ENCODE measurements at regions of chrX and their contacts with region 1.

Region 1: DNA sequence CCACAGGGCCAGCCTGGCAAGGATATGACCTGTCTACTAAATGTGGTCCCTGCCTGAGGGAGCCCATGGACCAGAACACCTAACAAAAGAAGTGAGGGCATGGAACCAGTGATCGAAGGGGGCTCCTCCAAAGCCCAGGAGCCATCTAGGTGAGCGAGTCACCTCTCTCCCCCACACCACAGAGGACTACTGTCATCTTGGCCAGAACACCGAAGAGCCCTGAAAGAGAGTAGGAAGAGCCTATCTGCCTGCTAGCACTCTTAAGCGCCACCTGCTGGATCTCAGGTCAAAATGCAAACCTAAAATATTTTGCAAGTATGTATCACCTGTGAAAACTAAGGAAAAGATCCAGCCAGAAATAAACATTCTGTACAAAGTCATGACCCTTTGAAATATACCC is 137.9 kb upstream of the ZXDB start:
- DNase-seq: no peak
- H3K4me3 ChIP-seq: no peak overlapping the region
- H3K27ac ChIP-seq: no peak overlapping the region
- H3K27me3 ChIP-seq: peaks cover 0 to 66% (median 7%) of the 10 kb centered on the region in 45 donors
- CTCF ChIP-seq: peak in 47 of 56 donors; percentile 15 to 62 (median 44)

Region 2: DNA sequence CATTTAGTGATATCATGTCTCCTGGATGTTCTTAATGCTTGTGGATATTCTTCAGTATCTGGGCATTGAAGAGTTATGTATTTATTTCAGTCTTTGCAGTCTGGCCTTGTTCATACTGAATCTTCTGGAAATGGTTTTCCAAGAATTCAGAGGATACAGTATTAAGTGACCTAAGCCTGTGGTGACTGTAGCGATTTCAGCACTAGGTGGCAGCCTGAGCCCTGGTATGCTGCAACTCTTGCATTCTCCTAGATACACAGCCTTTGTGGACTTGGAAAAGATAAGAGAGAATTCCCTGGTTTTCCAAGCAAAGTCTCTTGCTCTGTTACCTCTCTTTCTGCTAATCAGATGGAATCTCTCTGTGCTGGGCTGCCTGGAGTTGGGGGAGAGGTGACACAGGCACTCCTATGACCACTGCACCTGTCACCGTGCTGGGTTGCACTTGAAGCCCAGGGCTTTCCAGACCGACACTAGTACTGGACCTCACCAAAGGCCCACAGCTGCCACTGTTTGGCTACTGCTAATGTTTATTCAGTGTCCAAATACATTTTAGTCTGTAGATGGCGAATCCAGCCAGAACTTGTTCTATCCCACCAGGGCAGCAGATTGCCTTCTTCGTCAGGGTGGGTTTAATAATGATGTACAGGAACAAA is 297.4 kb before region 1 on chrX:
- intact Hi-C with region 1: loop called in 1 of 2 experiments (anchors 5 kb)
- DNase-seq: peak in 4 of 10 donors; percentile 17 to 56 (median 42)
- H3K4me3 ChIP-seq: no peak overlapping the region
- H3K27ac ChIP-seq: no peak overlapping the region
- H3K27me3 ChIP-seq: peaks cover 0 to 21% (median 0%) of the 10 kb centered on the region in 45 donors
- CTCF ChIP-seq: peak in 50 of 56 donors; percentile 8 to 60 (median 34)